Activated CD8-positive, alpha-beta T cell treated with anti-CD3 and anti-CD28 coated beads, Interleukin-2, amount 10 ng/mL, durations not matched to agents 7 days and 5 days (primary cell): ENCODE measurements at regions of chr20 and their contacts with region 1.

Region 1: GRCh38 chr20:2172305-2173175 is 70.9 kb downstream of the STK35 start:
- DNase-seq: peak; percentile 73
- ATAC-seq: peak; percentile 67
- H3K4me3 Mint-ChIP-seq: no peak overlapping the region
- H3K27ac Mint-ChIP-seq: no peak overlapping the region
- H3K4me1 Mint-ChIP-seq: peaks cover 3% of the 10 kb centered on the region
- H3K27me3 Mint-ChIP-seq: peaks cover 9% of the 10 kb centered on the region

Region 2: DNA sequence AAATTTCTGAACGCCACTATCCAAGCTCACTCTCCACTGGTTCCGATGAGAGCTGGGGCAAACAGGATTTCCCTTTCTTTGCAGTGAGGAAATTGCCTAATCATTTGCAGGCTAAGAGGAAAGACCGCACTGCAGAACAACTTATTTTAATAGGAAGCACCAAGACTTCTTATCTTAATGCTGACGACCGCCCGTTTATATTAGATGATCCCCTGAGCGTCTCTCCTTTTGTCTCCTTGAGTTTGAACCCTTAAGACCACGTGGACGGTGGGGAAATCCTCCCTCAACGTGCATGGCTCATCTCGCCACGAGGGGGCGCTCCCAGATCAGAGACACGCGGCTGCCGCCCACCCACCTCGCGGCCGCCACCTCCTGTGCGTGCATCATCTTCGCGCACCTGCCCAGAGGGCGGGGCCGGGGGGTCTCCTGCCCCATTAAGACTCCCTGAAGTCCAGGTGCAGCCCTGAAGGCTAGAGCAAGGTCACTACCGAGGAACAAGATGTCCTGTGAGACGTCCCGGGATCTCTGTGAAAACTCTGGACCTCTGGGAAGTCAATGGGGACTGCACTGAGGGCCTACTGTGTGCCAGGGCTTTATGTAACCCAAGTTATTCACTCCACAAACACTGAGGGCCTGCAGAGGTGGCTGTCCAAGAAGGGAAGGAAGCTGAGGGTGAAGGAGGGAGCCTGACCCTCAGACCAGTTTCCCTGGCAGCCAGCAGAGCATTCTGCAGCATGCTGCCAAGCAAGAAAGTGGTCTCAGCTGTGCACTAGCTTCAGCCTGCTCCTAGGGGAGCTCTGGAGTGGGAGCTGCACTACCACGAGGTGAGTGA is 206.8 kb before region 1 on chr20:
- CTCF ChIA-PET with region 1: interaction called, 40 read pairs
- POLR2A ChIA-PET with region 1: no interaction called
- DNase-seq: peak; percentile 83
- ATAC-seq: peak; percentile 90
- H3K4me3 Mint-ChIP-seq: peak overlapping the region; percentile 32
- H3K27ac Mint-ChIP-seq: no peak overlapping the region
- H3K4me1 Mint-ChIP-seq: peaks cover 12% of the 10 kb centered on the region
- H3K27me3 Mint-ChIP-seq: peaks cover 30% of the 10 kb centered on the region

Region 3: DNA sequence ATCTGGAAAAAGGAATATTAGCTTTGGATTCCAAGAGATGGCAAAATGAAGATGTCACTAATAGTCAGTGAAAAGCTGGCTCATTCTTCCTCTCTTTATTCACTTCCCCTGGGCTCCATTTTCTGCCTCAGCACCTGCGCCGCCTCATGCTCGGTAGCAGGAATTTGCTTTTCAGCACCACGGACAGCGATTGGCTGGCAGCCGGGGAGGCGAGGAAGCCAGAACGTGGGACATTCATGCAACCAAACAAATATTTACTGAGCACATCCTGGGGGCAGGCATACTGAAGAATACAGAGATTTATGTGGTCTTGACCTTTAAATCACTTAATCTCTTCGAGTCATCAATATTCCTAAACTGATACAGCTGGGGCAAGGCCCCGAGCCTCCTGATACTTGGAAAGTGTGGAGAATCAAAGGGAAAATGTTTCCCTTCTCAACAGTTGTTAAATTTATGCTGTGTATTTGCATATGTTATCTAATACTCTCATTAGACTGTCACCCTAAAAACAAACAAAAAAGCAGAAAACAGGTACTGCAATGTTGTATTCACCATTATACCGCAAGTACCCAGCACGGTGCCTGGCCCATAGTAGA is 166.6 kb before region 1 on chr20:
- CTCF ChIA-PET with region 1: interaction called, 40 read pairs
- POLR2A ChIA-PET with region 1: no interaction called
- DNase-seq: peak; percentile 80
- ATAC-seq: no peak
- H3K4me3 Mint-ChIP-seq: no peak overlapping the region
- H3K27ac Mint-ChIP-seq: no peak overlapping the region
- H3K4me1 Mint-ChIP-seq: no peaks in the 10 kb centered on the region
- H3K27me3 Mint-ChIP-seq: peaks cover 4% of the 10 kb centered on the region

Region 4: DNA sequence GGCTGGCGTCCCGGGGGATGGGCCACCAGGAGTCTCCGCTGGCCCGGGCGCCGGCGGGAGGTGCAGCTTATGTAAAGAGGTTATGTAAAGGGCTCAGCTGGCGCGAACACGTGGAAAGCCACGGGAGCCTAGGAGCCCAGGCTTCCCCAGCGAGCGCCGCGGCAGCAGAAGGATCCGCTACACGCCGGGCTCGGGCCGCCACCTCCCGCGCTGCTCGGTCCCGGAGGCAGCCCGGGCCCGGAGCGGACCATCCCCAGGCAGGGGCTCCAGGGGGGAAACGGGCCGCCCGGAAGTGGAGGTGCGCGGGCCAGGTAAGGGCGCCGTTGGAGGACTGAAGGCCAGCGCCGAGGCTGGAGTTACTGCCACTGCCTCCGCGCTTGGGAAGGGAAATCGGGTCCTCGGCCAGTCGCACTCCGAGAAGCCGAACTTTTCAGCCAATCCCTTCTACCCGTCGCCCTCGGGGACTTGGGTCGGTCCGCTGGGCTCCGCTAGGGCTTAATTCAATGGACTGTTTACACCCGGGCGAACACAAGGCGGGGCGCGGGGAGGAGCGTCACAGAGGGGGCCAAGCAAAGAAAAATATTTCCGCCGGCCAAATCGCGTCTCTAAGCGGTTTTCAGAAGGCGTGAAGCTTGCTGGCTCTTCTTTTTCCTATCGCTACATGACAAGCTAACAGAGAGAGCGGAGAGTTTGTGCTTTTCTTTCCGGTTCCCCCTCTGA is 70.5 kb before region 1 on chr20:
- CTCF ChIA-PET with region 1: interaction called, 10 read pairs
- POLR2A ChIA-PET with region 1: no interaction called
- DNase-seq: peak; percentile 92
- ATAC-seq: peak; percentile 85
- H3K4me3 Mint-ChIP-seq: peak overlapping the region; percentile 88
- H3K27ac Mint-ChIP-seq: peak overlapping the region; percentile 100
- H3K4me1 Mint-ChIP-seq: peaks cover 41% of the 10 kb centered on the region
- H3K27me3 Mint-ChIP-seq: peaks cover 3% of the 10 kb centered on the region

Region 5: GRCh38 chr20:2183381-2183780 is 10.8 kb after region 1 on chr20:
- CTCF ChIA-PET with region 1: interaction called, 11 read pairs
- POLR2A ChIA-PET with region 1: no interaction called
- DNase-seq: no peak
- ATAC-seq: no peak
- H3K4me3 Mint-ChIP-seq: no peak overlapping the region
- H3K27ac Mint-ChIP-seq: no peak overlapping the region
- H3K4me1 Mint-ChIP-seq: no peaks in the 10 kb centered on the region
- H3K27me3 Mint-ChIP-seq: peaks cover 12% of the 10 kb centered on the region

Region 6: GRCh38 chr20:2276015-2276414 is 103.5 kb after region 1 on chr20:
- CTCF ChIA-PET with region 1: no interaction called
- POLR2A ChIA-PET with region 1: no interaction called
- DNase-seq: no peak
- ATAC-seq: no peak
- H3K4me3 Mint-ChIP-seq: no peak overlapping the region
- H3K27ac Mint-ChIP-seq: no peak overlapping the region
- H3K4me1 Mint-ChIP-seq: no peaks in the 10 kb centered on the region
- H3K27me3 Mint-ChIP-seq: peaks cover 7% of the 10 kb centered on the region